Panc1 (cell line): ENCODE measurements at regions of chrX and their contacts with region 1.

Region 1: GRCh38 chrX:134735015-134735414 is 76.7 kb upstream of the PLAC1 start:
- DNase-seq: no peak
- ATAC-seq: no peak
- H3K4me3 ChIP-seq: no peak overlapping the region
- H3K27ac ChIP-seq: no peak overlapping the region
- H3K4me1 ChIP-seq: no peaks in the 10 kb centered on the region
- H3K27me3 ChIP-seq: no peaks in the 10 kb centered on the region
- CTCF ChIP-seq: no peak

Region 2: DNA sequence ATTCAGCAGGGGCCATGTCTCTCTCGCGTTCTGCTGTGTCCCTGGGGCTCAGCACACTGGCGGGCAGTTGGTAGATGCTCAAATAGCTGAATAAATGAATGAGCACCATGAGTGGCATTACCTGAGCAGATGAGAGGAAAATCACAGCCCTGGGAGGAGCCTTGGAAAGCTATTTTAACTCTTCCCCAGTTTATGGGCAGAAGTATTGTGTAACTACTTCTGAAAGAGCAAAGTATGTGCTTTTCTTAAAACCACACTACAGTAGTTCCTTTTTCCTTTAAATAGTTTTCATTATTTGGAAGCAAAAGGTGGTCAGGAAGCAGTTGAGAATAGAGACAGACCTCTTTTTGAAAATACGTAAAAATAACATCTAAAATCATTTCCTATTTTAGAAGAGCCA is 73.7 kb before region 1 on chrX:
- CTCF ChIA-PET with region 1: interaction called, 11 read pairs
- POLR2A ChIA-PET with region 1: no interaction called
- in situ Hi-C with region 1: no loop called
- intact Hi-C with region 1: no loop called
- DNase-seq: no peak
- ATAC-seq: no peak
- H3K4me3 ChIP-seq: no peak overlapping the region
- H3K27ac ChIP-seq: no peak overlapping the region
- H3K4me1 ChIP-seq: no peaks in the 10 kb centered on the region
- H3K27me3 ChIP-seq: no peaks in the 10 kb centered on the region
- CTCF ChIP-seq: no peak